ENCODE measurements at regions of chr3 and their contacts with region 1.

Region 1: GRCh38 chr3:15659254-15659975 is 57.9 kb downstream of the BTD start:
- DNase-seq: peak; percentile 73
- H3K4me3 ChIP-seq: no peak overlapping the region
- H3K27ac ChIP-seq: no peak overlapping the region
- H3K4me1 ChIP-seq: no peaks in the 10 kb centered on the region
- H3K27me3 ChIP-seq: no peaks in the 10 kb centered on the region
- CTCF ChIP-seq: no peak

Region 2: DNA sequence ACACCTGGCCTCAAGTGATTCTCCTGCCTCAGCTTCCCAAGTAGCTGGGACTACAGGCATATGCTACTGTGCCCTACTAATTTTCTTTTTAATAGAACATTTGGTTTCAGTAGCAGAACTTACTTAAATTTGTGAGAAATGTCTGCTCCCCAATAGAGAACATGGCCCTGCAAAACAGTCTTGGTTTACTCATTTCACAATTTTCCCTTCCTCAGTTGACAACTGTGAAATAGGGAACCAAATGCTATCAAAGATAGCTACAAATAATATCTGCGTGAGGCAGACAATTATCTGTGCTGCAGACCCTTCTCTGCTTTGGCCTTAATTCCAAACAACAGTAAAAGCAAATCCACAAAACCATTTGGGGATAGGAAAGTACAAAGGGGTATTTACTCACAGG is 254.6 kb before region 1 on chr3:
- CTCF ChIA-PET with region 1: no interaction called
- POLR2A ChIA-PET with region 1: no interaction called
- intact Hi-C with region 1: no loop called
- DNase-seq: no peak
- H3K4me3 ChIP-seq: no peak overlapping the region
- H3K27ac ChIP-seq: no peak overlapping the region
- H3K4me1 ChIP-seq: no peaks in the 10 kb centered on the region
- H3K27me3 ChIP-seq: no peaks in the 10 kb centered on the region
- CTCF ChIP-seq: no peak

Region 3: DNA sequence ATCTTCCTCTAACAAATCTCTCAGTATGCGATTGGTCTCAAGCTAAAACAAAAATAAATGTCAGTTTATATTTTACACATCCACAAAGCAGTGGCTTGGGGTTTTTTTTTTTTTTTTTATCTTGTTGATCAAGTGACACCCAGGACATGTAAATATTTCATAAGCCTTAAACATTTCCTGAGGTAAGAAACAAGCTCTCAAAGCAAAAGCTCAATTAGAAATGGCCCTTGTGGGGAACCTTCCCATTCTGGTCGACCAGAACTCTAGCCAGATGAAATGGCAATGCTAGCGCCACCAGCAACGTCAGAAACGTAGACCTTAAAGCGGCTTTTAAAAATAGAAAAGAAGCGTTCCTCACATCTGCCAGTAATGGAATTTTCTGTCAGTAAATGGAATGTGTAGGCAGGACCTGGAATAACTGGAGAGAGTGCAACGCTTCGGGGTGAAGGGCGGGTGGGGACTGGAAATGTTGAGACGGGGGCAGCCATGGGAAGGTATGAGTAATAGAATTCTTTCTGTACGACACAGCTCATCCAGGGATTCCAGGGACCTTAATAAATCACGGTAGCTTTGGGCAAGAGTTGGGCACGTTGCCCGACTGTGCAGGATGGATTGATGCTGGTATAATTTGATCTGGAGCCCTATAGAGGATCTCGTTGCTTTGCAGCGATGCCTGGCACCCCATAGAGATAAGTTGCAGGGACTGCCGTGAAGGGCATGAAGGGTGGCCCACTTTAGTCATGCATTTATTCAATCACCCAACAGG is 13.5 kb before region 1 on chr3:
- CTCF ChIA-PET with region 1: no interaction called
- POLR2A ChIA-PET with region 1: interaction called, 12 read pairs
- intact Hi-C with region 1: no loop called
- DNase-seq: peak; percentile 87
- H3K4me3 ChIP-seq: no peak overlapping the region
- H3K27ac ChIP-seq: no peak overlapping the region
- H3K4me1 ChIP-seq: peaks cover 15% of the 10 kb centered on the region
- H3K27me3 ChIP-seq: no peaks in the 10 kb centered on the region
- CTCF ChIP-seq: no peak

Measured in A673 (cell line).